Mucosa of descending colon (tissue), 3 donors: ENCODE measurements at regions of chr2 and their contacts with region 1.

Region 1: GRCh38 chr2:5977478-5977877 is 285.3 kb downstream of the SOX11 start:
- DNase-seq: no peak
- ATAC-seq: no peak
- H3K4me3 ChIP-seq: no peak overlapping the region
- H3K4me1 ChIP-seq: no peaks in the 10 kb centered on the region
- CTCF ChIP-seq: no peak

Region 2: GRCh38 chr2:6080932-6081753 is 103.7 kb after region 1 on chr2:
- intact Hi-C with region 1: no loop called
- DNase-seq: no peak
- ATAC-seq: peak; percentile 46
- H3K4me3 ChIP-seq: no peak overlapping the region
- H3K4me1 ChIP-seq: no peaks in the 10 kb centered on the region
- CTCF ChIP-seq: no peak

Region 3: DNA sequence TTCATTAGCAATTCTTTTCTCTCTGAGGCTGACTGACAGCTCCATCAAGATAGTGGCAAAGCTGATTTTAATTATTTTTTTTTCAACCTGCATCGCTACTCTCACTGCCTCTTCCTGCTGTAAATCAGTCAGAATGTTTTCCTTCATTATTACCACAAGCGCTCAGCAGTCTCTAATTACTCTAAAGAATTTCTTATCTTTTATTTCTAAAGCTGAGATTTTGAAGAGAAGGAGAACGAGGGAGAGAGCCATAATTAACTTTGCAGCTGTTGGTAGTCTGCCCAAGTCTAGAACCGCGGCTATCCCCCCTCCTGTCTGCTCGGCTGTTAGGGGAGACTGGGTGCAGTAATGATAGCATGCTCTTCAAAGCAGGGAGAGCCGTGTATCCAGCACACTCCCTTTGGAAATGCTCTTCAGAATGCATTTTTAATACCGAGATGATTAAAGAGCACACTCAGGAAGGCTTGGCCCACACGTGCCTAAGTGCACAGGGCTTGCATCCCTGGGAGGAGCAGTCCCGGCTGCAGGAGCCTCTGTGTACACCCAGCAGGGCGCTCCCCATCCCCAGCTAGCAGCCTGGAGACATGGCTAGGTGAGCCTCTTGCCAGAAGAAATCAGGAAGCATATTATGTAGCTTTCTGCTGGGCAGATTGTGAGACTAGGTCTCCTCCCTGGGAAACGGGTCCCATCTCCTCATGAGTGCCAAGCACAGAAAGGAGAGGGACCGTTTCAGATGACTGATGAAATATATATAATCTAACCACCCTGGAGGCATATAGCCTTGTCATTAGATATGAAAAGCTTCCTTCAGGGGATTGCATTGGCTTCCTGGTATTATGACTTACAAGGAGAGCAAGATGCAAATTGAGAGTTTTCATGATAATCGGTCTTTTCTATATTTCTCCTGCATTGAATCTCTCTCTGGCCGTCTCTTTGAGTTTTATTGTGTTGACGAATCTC is 333.1 kb after region 1 on chr2:
- intact Hi-C with region 1: loop called in 1 of 2 experiments (anchors 10 kb)
- DNase-seq: no peak
- ATAC-seq: no peak
- H3K4me3 ChIP-seq: no peak overlapping the region
- H3K4me1 ChIP-seq: no peaks in the 10 kb centered on the region
- CTCF ChIP-seq: no peak